ENCODE measurements at regions of chr18 and their contacts with region 1.

Region 1: GRCh38 chr18:24362758-24363157 is 34.9 kb downstream of the OSBPL1A start:
- DNase-seq: no peak
- H3K4me3 ChIP-seq: no peak overlapping the region
- CTCF ChIP-seq: no peak

Region 2: GRCh38 chr18:24054130-24054529 is 308.6 kb before region 1 on chr18:
- CTCF ChIA-PET with region 1: no interaction called
- POLR2A ChIA-PET with region 1: no interaction called
- DNase-seq: no peak
- H3K4me3 ChIP-seq: no peak overlapping the region
- CTCF ChIP-seq: no peak

Region 3: GRCh38 chr18:24346254-24346653 is 16.5 kb before region 1 on chr18:
- CTCF ChIA-PET with region 1: interaction called, 40 read pairs
- POLR2A ChIA-PET with region 1: no interaction called
- DNase-seq: no peak
- H3K4me3 ChIP-seq: no peak overlapping the region
- CTCF ChIP-seq: no peak

Region 4: DNA sequence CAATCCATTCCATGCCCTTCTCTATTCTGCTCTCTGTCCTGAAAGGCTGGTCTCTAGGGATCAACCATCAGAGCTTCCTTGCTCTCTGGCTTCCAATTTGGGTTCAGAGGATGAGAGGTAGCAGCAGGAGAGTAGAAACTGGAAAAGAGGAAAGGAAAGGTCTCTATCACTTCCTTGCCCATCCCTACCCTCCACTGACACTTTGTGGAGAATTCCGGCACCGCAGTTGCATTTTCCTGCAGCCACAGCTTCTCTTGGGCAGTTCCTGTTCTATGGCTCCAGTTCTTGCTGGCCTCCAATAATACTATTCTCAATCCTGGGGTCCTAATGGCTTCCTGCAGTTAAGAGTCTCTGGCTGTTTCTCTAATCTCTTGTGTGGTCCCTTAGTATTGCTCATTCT is 50.4 kb after region 1 on chr18:
- CTCF ChIA-PET with region 1: interaction called, 85 read pairs
- POLR2A ChIA-PET with region 1: no interaction called
- DNase-seq: no peak
- H3K4me3 ChIP-seq: no peak overlapping the region
- CTCF ChIP-seq: peak; percentile 49

Region 5: GRCh38 chr18:24726727-24727492 is 364.2 kb after region 1 on chr18:
- CTCF ChIA-PET with region 1: interaction called, 20 read pairs
- POLR2A ChIA-PET with region 1: no interaction called
- DNase-seq: peak; percentile 46
- H3K4me3 ChIP-seq: peak overlapping the region; percentile 42
- CTCF ChIP-seq: peak; percentile 77